CD4-positive, alpha-beta memory T cell (primary cell): ENCODE measurements at regions of chr9 and their contacts with region 1.

Region 1: GRCh38 chr9:72280913-72281500 is 84.0 kb downstream of the ZFAND5 start:
- DNase-seq: peak; percentile 61 to 66 (median 64)
- H3K4me3 ChIP-seq: no peak overlapping the region
- H3K4me3 Mint-ChIP-seq: no peak overlapping the region
- H3K27ac ChIP-seq: no peak overlapping the region
- H3K27ac Mint-ChIP-seq: no peak overlapping the region
- H3K4me1 ChIP-seq: no peaks in the 10 kb centered on the region
- H3K4me1 Mint-ChIP-seq: no peaks in the 10 kb centered on the region
- H3K27me3 ChIP-seq: no peaks in the 10 kb centered on the region
- H3K27me3 Mint-ChIP-seq: peaks cover 0 to 1% of the 10 kb centered on the region in 2 donors

Region 2: DNA sequence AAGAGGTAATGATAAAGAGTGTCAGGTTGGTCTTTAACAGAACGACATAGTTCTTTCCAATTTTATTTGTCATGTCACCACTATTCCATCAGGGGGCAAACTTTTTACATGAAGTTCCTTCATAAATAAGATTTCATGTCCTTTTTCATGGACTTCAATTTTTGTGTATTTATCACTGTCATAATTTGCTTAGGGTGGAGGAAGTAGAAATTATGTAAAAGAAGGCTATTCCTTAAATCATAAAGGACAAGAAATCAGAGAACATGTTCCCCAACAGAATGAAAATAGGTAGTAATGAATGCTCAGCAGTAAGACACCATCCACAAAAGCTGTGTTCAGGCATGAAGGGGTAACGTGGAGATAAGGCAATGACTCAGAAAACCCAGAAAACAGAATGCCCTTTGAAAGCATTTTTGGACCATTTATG is 11.3 kb after region 1 on chr9:
- CTCF ChIA-PET with region 1: interaction called, 69 read pairs
- POLR2A ChIA-PET with region 1: no interaction called
- intact Hi-C with region 1: no loop called
- DNase-seq: peak in 4 of 5 donors; percentile 24 to 37 (median 29)
- H3K4me3 ChIP-seq: no peak overlapping the region
- H3K4me3 Mint-ChIP-seq: no peak overlapping the region
- H3K27ac ChIP-seq: no peak overlapping the region
- H3K27ac Mint-ChIP-seq: no peak overlapping the region
- H3K4me1 ChIP-seq: no peaks in the 10 kb centered on the region
- H3K4me1 Mint-ChIP-seq: peaks cover 0 to 3% (median under 1%) of the 10 kb centered on the region in 4 donors
- H3K27me3 ChIP-seq: no peaks in the 10 kb centered on the region
- H3K27me3 Mint-ChIP-seq: peaks cover 5 to 6% of the 10 kb centered on the region in 2 donors

Region 3: DNA sequence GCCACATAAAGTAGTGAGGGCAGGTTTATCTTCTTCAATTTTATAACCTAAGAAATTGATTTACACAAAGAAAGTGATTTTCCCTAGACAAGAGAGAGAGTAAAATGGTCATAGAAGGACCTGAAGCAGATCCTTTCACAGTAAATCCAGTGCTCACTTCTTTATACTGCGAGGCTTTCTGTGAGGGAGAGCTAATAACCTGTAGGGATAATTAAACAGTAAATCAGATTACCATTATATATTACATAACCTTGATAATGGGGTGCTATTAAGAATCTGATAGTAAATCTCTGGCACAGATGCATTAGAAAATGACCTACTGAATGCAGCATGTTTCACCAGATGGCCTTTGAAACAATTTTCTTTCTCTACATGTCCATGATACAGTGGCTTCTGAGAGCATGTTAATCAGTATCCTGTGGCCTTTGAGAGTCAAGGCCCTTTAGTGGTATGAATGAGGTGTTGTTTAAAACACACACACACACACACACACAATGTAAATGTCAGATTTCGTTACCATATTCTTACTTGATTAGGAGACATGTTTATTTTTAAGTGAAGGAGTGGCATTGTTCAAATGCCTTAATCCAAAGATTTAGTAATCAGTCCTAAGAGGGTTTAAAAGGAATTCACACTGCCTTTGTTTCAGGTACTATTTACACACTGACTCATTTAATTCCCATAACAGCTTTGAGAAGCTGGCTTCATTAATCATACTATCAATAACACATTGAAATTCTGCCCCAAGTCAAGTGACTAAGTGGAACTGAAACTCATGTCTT is 547.1 kb after region 1 on chr9:
- CTCF ChIA-PET with region 1: interaction called, 63 read pairs
- POLR2A ChIA-PET with region 1: no interaction called
- intact Hi-C with region 1: no loop called
- DNase-seq: no peak
- H3K4me3 ChIP-seq: no peak overlapping the region
- H3K4me3 Mint-ChIP-seq: no peak overlapping the region
- H3K27ac ChIP-seq: no peak overlapping the region
- H3K27ac Mint-ChIP-seq: no peak overlapping the region
- H3K4me1 ChIP-seq: no peaks in the 10 kb centered on the region
- H3K4me1 Mint-ChIP-seq: no peaks in the 10 kb centered on the region
- H3K27me3 ChIP-seq: no peaks in the 10 kb centered on the region
- H3K27me3 Mint-ChIP-seq: peaks cover 3 to 4% of the 10 kb centered on the region in 2 donors

Region 4: GRCh38 chr9:73023025-73023541 is 742.1 kb after region 1 on chr9:
- CTCF ChIA-PET with region 1: interaction called, 68 read pairs
- POLR2A ChIA-PET with region 1: no interaction called
- intact Hi-C with region 1: no loop called
- DNase-seq: peak; percentile 32 to 49 (median 35)
- H3K4me3 ChIP-seq: no peak overlapping the region
- H3K4me3 Mint-ChIP-seq: peak overlapping the region in 1 of 8 donors; percentile 12
- H3K27ac ChIP-seq: no peak overlapping the region
- H3K27ac Mint-ChIP-seq: no peak overlapping the region
- H3K4me1 ChIP-seq: peaks cover 4% of the 10 kb centered on the region
- H3K4me1 Mint-ChIP-seq: peaks cover 0 to 10% (median 6%) of the 10 kb centered on the region in 4 donors
- H3K27me3 ChIP-seq: no peaks in the 10 kb centered on the region
- H3K27me3 Mint-ChIP-seq: peaks cover 6 to 11% of the 10 kb centered on the region in 2 donors

Region 5: GRCh38 chr9:73081979-73082657 is 801.1 kb after region 1 on chr9:
- CTCF ChIA-PET with region 1: interaction called, 19 read pairs
- POLR2A ChIA-PET with region 1: no interaction called
- intact Hi-C with region 1: loop called (anchors 1 kb)
- DNase-seq: peak in 3 of 5 donors; percentile 11 to 28 (median 13)
- H3K4me3 ChIP-seq: no peak overlapping the region
- H3K4me3 Mint-ChIP-seq: no peak overlapping the region
- H3K27ac ChIP-seq: no peak overlapping the region
- H3K27ac Mint-ChIP-seq: no peak overlapping the region
- H3K4me1 ChIP-seq: no peaks in the 10 kb centered on the region
- H3K4me1 Mint-ChIP-seq: no peaks in the 10 kb centered on the region
- H3K27me3 ChIP-seq: no peaks in the 10 kb centered on the region
- H3K27me3 Mint-ChIP-seq: peaks cover 10 to 21% of the 10 kb centered on the region in 2 donors